Heart right ventricle (tissue), 16 donors: ENCODE measurements at regions of chr12 and their contacts with region 1.

Region 1: DNA sequence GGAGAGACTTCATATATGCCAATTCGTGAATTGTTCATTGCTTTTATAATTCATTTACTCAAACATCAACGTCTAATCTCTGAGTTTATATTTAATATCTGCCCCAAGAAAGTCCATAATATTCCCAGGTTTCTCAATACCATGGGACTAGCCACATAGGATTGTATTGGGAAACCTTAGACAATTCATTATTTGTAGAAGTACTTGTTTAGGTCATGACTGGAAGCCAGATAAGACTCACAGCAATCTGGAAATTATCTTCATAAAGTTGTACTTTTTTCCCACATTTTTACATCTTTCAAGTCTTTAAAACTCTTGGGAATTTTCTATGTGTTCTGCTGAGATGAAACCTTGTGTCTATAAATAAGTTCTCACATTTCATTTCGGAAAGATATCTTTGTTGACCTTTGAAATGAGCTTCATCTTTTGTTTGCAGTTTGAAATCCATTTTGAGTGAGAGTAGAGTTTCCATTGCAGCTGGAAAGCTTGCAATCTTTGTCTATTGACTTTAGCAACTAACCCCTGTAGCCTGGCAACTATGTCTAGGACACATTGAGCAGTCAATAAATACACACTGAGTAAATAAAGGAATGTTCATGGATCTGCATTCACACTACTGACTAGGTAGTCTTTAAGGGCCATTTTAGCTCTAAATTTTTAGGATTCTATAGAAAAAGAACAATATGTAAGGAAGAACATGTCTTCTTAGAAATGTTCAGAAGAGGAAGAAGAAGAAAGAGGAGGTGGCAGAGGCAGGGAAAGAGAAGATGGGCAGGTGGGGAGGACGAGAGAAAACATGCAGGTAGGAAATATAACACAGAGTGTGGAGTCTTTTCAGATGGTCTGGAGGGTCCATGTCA is 154.4 kb downstream of the LRIG3 start:
- DNase-seq: no peak
- ATAC-seq: peak in 3 of 8 donors; percentile 30 to 91 (median 88)
- H3K4me3 ChIP-seq: no peak overlapping the region
- H3K27ac ChIP-seq: peak overlapping the region in 1 of 10 donors; percentile 19
- H3K4me1 ChIP-seq: no peaks in the 10 kb centered on the region
- H3K27me3 ChIP-seq: no peaks in the 10 kb centered on the region
- CTCF ChIP-seq: no peak

Region 2: DNA sequence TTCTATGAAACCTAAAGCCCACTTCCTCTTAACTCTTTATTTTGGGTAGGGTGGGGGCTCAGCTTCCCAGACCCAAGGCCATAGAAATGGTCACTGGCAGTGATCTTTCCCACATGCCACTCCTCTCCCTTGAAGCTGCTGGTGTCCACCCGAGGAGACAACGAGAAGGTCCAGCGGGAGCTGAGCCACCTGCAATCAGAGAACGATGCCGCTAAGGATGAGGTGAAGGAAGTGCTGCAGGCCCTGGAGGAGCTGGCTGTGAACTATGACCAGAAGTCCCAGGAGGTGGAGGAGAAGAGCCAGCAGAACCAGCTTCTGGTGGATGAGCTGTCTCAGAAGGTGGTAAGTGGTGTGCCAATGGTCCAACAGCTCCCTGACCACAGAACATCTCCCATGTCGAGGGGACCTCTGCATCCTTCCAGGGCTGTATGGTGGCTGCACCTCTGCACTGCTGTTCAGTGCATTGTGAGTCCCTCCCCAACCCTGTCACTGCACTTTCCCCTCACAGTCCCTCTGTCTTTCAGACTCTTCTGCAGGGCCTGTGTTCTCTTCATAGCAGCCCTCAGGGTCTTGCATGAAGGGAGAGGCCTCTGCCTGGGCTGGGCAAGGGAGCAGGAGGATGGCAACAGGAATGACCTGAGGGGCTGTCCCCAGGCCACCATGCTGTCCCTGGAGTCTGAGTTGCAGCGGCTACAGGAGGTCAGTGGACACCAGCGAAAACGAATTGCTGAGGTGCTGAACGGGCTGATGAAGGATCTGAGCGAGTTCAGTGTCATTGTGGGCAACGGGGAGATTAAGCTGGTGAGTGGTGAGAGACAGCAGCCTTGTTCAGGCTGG is 1193.7 kb before region 1 on chr12:
- intact Hi-C with region 1: no loop called
- DNase-seq: no peak
- ATAC-seq: no peak
- H3K4me3 ChIP-seq: no peak overlapping the region
- H3K27ac ChIP-seq: no peak overlapping the region
- H3K4me1 ChIP-seq: no peaks in the 10 kb centered on the region
- H3K27me3 ChIP-seq: peaks cover 0 to 40% (median 16%) of the 10 kb centered on the region in 7 donors
- CTCF ChIP-seq: no peak

Region 3: GRCh38 chr12:58051378-58051777 is 714.5 kb before region 1 on chr12:
- intact Hi-C with region 1: no loop called
- DNase-seq: no peak
- ATAC-seq: no peak
- H3K4me3 ChIP-seq: no peak overlapping the region
- H3K27ac ChIP-seq: no peak overlapping the region
- H3K4me1 ChIP-seq: no peaks in the 10 kb centered on the region
- H3K27me3 ChIP-seq: no peaks in the 10 kb centered on the region
- CTCF ChIP-seq: no peak

Region 4: GRCh38 chr12:58681731-58682130 is 84.2 kb before region 1 on chr12:
- intact Hi-C with region 1: no loop called
- DNase-seq: no peak
- ATAC-seq: no peak
- H3K4me3 ChIP-seq: no peak overlapping the region
- H3K27ac ChIP-seq: no peak overlapping the region
- H3K4me1 ChIP-seq: no peaks in the 10 kb centered on the region
- H3K27me3 ChIP-seq: no peaks in the 10 kb centered on the region
- CTCF ChIP-seq: no peak

Region 5: GRCh38 chr12:58814036-58814435 is 48.2 kb after region 1 on chr12:
- intact Hi-C with region 1: loop called in 1 of 10 experiments (anchors 10 kb)
- DNase-seq: no peak
- ATAC-seq: peak in 1 of 8 donors; percentile 31
- H3K4me3 ChIP-seq: no peak overlapping the region
- H3K27ac ChIP-seq: no peak overlapping the region
- H3K4me1 ChIP-seq: peaks cover 0 to 13% (median 2%) of the 10 kb centered on the region in 9 donors
- H3K27me3 ChIP-seq: no peaks in the 10 kb centered on the region
- CTCF ChIP-seq: no peak